Naive thymus-derived CD4-positive, alpha-beta T cell (primary cell): ENCODE measurements at regions of chr2 and their contacts with region 1.

Region 1: GRCh38 chr2:171574149-171574795 is 52.0 kb downstream of the CYBRD1 start:
- DNase-seq: peak; percentile 50 to 84 (median 73)
- ATAC-seq: peak; percentile 99
- H3K4me3 ChIP-seq: no peak overlapping the region
- H3K4me3 Mint-ChIP-seq: peak overlapping the region in 6 of 10 donors; percentile 13 to 69 (median 16)
- H3K27ac ChIP-seq: no peak overlapping the region
- H3K27ac Mint-ChIP-seq: peak overlapping the region in 2 of 9 donors; percentile 31 to 60
- H3K4me1 ChIP-seq: peaks cover 0 to 3% of the 10 kb centered on the region in 2 donors
- H3K4me1 Mint-ChIP-seq: peaks cover 0 to 7% (median 6%) of the 10 kb centered on the region in 7 donors
- H3K27me3 ChIP-seq: no peaks in the 10 kb centered on the region
- H3K27me3 Mint-ChIP-seq: peaks cover 0 to 8% (median 0%) of the 10 kb centered on the region in 5 donors

Region 2: GRCh38 chr2:171598713-171599319 is 24.5 kb after region 1 on chr2:
- CTCF ChIA-PET with region 1: interaction called, 4 read pairs
- POLR2A ChIA-PET with region 1: no interaction called
- intact Hi-C with region 1: loop called in 1 of 2 experiments (anchors 1 kb)
- DNase-seq: peak in 7 of 9 donors; percentile 22 to 64 (median 51)
- ATAC-seq: peak; percentile 94
- H3K4me3 ChIP-seq: no peak overlapping the region
- H3K4me3 Mint-ChIP-seq: no peak overlapping the region
- H3K27ac ChIP-seq: no peak overlapping the region
- H3K27ac Mint-ChIP-seq: no peak overlapping the region
- H3K4me1 ChIP-seq: peaks cover 0 to 3% of the 10 kb centered on the region in 2 donors
- H3K4me1 Mint-ChIP-seq: peaks cover 0 to 6% (median 0%) of the 10 kb centered on the region in 7 donors
- H3K27me3 ChIP-seq: no peaks in the 10 kb centered on the region
- H3K27me3 Mint-ChIP-seq: peaks cover 0 to 25% (median 4%) of the 10 kb centered on the region in 5 donors

Region 3: DNA sequence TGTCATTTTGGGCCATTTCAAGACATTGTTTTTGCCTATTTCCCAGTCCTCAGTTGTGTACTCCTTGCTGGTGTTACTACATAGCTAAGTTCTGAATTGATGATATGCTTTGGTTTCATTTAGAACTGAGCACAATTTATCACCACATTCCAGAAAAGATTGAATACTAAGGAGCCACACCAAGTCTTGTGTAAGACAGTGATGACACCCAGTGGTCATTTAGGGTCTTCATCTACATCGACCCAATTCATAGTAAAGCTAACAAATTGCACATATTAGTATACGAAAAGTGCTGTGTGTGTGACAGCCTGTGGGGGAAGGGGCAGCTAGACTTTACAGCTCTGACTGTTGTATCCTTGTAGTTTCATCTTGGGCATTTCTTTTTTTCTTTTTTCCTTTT is 539.3 kb after region 1 on chr2:
- CTCF ChIA-PET with region 1: no interaction called
- POLR2A ChIA-PET with region 1: no interaction called
- intact Hi-C with region 1: loop called in 1 of 2 experiments (anchors 1 kb)
- DNase-seq: peak in 1 of 9 donors; percentile 4
- ATAC-seq: no peak
- H3K4me3 ChIP-seq: no peak overlapping the region
- H3K4me3 Mint-ChIP-seq: no peak overlapping the region
- H3K27ac ChIP-seq: no peak overlapping the region
- H3K27ac Mint-ChIP-seq: no peak overlapping the region
- H3K4me1 ChIP-seq: no peaks in the 10 kb centered on the region
- H3K4me1 Mint-ChIP-seq: peaks cover 0 to 10% (median 3%) of the 10 kb centered on the region in 7 donors
- H3K27me3 ChIP-seq: peaks cover 0 to 2% of the 10 kb centered on the region in 2 donors
- H3K27me3 Mint-ChIP-seq: peaks cover 43 to 57% (median 45%) of the 10 kb centered on the region in 5 donors

Region 4: GRCh38 chr2:172131713-172132555 is 557.7 kb after region 1 on chr2:
- CTCF ChIA-PET with region 1: interaction called, 3 read pairs
- POLR2A ChIA-PET with region 1: no interaction called
- intact Hi-C with region 1: loop called in 1 of 2 experiments (anchors 2 kb)
- DNase-seq: no peak
- ATAC-seq: no peak
- H3K4me3 ChIP-seq: no peak overlapping the region
- H3K4me3 Mint-ChIP-seq: no peak overlapping the region
- H3K27ac ChIP-seq: no peak overlapping the region
- H3K27ac Mint-ChIP-seq: no peak overlapping the region
- H3K4me1 ChIP-seq: no peaks in the 10 kb centered on the region
- H3K4me1 Mint-ChIP-seq: no peaks in the 10 kb centered on the region
- H3K27me3 ChIP-seq: no peaks in the 10 kb centered on the region
- H3K27me3 Mint-ChIP-seq: peaks cover 0 to 34% (median 7%) of the 10 kb centered on the region in 5 donors

Region 5: DNA sequence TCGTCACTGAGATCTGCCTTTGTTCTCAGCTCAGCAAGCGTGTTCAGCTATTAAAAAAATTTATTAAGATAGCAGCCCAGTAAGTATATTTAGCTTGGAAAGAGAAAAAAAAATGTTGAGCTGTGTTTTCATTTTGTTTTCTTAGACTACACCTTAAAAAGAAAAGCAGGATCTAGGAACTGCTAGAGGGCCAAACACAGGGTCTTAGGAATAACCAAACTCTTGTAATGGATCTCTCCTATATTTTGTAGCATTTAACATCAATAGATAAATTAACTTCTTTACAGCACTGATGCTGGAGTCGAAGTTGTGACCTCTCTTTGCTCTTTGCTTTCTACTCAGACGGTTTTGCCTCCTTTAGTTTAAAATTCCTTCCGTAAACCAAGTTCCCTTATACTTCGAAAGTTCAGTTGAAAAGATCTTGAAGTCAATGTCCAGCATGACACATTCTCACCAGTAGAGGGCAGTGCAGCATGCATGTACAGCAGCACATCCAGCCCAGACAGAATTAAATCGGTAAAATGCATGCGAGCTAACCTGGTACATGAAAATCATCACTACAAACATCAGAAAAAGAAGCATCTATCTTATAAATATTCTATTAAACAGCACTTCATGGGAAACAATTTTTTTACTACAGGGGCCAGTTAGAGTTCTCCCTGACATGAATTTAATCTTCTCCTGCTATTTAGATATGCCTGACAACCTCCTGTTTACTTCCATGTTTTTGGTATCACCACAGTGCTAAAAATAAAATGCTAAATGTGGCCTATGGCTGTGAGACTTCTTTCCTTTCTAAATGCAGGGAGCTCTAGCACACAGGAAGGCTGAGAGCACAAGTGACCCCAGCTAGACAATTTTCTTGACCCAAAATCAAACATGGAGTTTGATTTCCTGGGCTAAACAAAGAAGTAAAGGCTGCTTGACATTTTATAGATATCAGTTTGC is 1453.2 kb after region 1 on chr2:
- CTCF ChIA-PET with region 1: no interaction called
- POLR2A ChIA-PET with region 1: no interaction called
- intact Hi-C with region 1: no loop called
- DNase-seq: peak; percentile 20 to 75 (median 63)
- ATAC-seq: peak; percentile 91
- H3K4me3 ChIP-seq: no peak overlapping the region
- H3K4me3 Mint-ChIP-seq: no peak overlapping the region
- H3K27ac ChIP-seq: no peak overlapping the region
- H3K27ac Mint-ChIP-seq: no peak overlapping the region
- H3K4me1 ChIP-seq: no peaks in the 10 kb centered on the region
- H3K4me1 Mint-ChIP-seq: peaks cover 0 to 7% (median 3%) of the 10 kb centered on the region in 7 donors
- H3K27me3 ChIP-seq: no peaks in the 10 kb centered on the region
- H3K27me3 Mint-ChIP-seq: peaks cover 6 to 15% (median 9%) of the 10 kb centered on the region in 5 donors